GM23248 (cell line): ENCODE measurements at regions of chr3 and their contacts with region 1.

Region 1: DNA sequence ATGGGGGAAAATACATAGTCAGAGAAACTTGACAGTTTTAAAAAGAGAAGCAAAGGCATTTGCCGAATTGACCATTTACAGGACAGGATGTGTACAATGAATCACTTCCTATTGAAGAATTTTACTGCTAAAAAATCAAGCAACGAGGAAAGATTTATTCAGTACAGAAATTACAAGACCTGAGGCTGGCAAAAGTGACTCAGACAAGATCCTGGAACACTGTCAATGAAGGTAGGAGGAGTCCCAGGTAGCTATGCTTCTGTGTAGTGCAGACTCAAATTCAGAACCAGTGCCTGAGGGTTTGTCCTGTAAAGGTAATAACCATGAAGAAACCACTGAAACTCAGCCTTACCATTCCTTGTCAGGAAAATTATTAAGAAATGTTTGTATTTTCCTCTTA is 120.9 kb downstream of the ZMAT3 start:
- DNase-seq: no peak
- H3K4me3 ChIP-seq: no peak overlapping the region
- H3K27ac ChIP-seq: no peak overlapping the region
- H3K4me1 ChIP-seq: no peaks in the 10 kb centered on the region
- H3K27me3 ChIP-seq: no peaks in the 10 kb centered on the region

Region 2: DNA sequence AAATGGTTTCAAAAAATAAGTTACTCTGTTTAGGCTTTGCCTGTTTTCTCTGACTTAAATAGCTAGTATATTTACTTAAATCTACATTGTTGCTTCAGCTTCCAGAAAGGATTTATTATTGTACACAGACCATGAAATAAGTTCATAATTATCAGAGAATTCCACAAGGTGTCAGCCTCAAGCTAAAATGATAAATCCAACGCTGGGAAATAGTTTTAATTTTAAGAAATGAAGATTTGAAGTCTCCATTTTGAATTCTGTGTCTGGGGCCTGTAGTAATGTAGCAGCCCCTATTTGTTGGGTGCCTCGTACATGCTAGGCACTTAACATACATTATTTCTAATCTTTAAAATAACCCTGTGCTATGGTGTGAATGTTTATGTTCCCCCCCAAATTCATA is 507.0 kb before region 1 on chr3:
- in situ Hi-C with region 1: loop called (anchors 10 kb)
- DNase-seq: peak; percentile 30
- H3K4me3 ChIP-seq: no peak overlapping the region
- H3K27ac ChIP-seq: no peak overlapping the region
- H3K4me1 ChIP-seq: no peaks in the 10 kb centered on the region
- H3K27me3 ChIP-seq: no peaks in the 10 kb centered on the region

Region 3: DNA sequence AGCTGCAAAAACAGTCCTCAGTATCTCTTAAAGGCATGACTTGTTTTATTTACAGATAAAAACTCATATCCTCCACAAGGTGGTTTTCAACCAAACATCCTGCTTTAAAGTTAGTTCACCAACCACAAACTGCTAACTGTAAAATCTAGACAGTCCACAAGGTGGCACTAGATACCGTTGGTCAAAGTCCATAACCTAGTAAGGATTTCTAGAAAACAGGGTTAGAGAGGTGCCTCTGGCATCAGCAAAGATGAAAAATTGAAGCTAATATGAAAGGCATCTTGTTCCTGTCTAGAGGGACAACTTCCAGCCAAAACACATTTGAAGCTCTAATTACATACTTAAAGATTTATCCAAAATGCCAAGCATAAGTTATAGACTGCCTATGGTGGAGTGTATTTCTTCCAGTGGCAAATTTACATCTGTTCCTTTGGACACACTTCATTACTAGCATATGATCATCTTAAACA is 64.9 kb after region 1 on chr3:
- in situ Hi-C with region 1: no loop called
- DNase-seq: peak; percentile 80
- H3K4me3 ChIP-seq: no peak overlapping the region
- H3K27ac ChIP-seq: no peak overlapping the region; the same call in 1 of the 2 replicates
- H3K4me1 ChIP-seq: peaks cover 12% of the 10 kb centered on the region; the same call in 1 of the 2 replicates
- H3K27me3 ChIP-seq: no peaks in the 10 kb centered on the region

Region 4: GRCh38 chr3:179565496-179565895 is 614.8 kb after region 1 on chr3:
- in situ Hi-C with region 1: no loop called
- DNase-seq: no peak
- H3K4me3 ChIP-seq: no peak overlapping the region
- H3K27ac ChIP-seq: no peak overlapping the region
- H3K4me1 ChIP-seq: peaks cover 8% of the 10 kb centered on the region
- H3K27me3 ChIP-seq: no peaks in the 10 kb centered on the region